Caco-2 (cell line): ENCODE measurements at regions of chr15 and their contacts with region 1.

Region 1: GRCh38 chr15:53384417-53384816 is 375.0 kb downstream of the WDR72 start:
- DNase-seq: peak; percentile 34 to 41
- H3K4me3 ChIP-seq: no peak overlapping the region
- H3K4me3 Mint-ChIP-seq: no peak overlapping the region
- H3K27ac Mint-ChIP-seq: no peak overlapping the region
- H3K4me1 ChIP-seq: no peaks in the 10 kb centered on the region
- H3K4me1 Mint-ChIP-seq: no peaks in the 10 kb centered on the region
- H3K27me3 ChIP-seq: no peaks in the 10 kb centered on the region
- H3K27me3 Mint-ChIP-seq: peaks cover 2% of the 10 kb centered on the region
- CTCF ChIP-seq: peak; percentile 43 to 61

Region 2: GRCh38 chr15:53367740-53368139 is 16.7 kb before region 1 on chr15:
- CTCF ChIA-PET with region 1: no interaction called
- POLR2A ChIA-PET with region 1: no interaction called
- intact Hi-C with region 1: no loop called
- DNase-seq: no peak
- H3K4me3 ChIP-seq: no peak overlapping the region
- H3K4me3 Mint-ChIP-seq: no peak overlapping the region
- H3K27ac Mint-ChIP-seq: no peak overlapping the region
- H3K4me1 ChIP-seq: no peaks in the 10 kb centered on the region
- H3K4me1 Mint-ChIP-seq: no peaks in the 10 kb centered on the region
- H3K27me3 ChIP-seq: no peaks in the 10 kb centered on the region
- H3K27me3 Mint-ChIP-seq: no peaks in the 10 kb centered on the region
- CTCF ChIP-seq: no peak

Region 3: GRCh38 chr15:53506370-53506769 is 122.0 kb after region 1 on chr15:
- CTCF ChIA-PET with region 1: no interaction called
- POLR2A ChIA-PET with region 1: no interaction called
- intact Hi-C with region 1: loop called (anchors 1 kb)
- DNase-seq: peak in 1 of 2 experiments; percentile 9
- H3K4me3 ChIP-seq: no peak overlapping the region
- H3K4me3 Mint-ChIP-seq: no peak overlapping the region
- H3K27ac Mint-ChIP-seq: no peak overlapping the region
- H3K4me1 ChIP-seq: no peaks in the 10 kb centered on the region
- H3K4me1 Mint-ChIP-seq: no peaks in the 10 kb centered on the region
- H3K27me3 ChIP-seq: no peaks in the 10 kb centered on the region
- H3K27me3 Mint-ChIP-seq: peaks cover 3% of the 10 kb centered on the region
- CTCF ChIP-seq: no peak

Region 4: GRCh38 chr15:53512030-53512429 is 127.6 kb after region 1 on chr15:
- CTCF ChIA-PET with region 1: interaction called, 12 read pairs
- POLR2A ChIA-PET with region 1: no interaction called
- intact Hi-C with region 1: loop called (anchors 1 kb)
- DNase-seq: no peak
- H3K4me3 ChIP-seq: no peak overlapping the region
- H3K4me3 Mint-ChIP-seq: no peak overlapping the region
- H3K27ac Mint-ChIP-seq: no peak overlapping the region
- H3K4me1 ChIP-seq: no peaks in the 10 kb centered on the region
- H3K4me1 Mint-ChIP-seq: no peaks in the 10 kb centered on the region
- H3K27me3 ChIP-seq: no peaks in the 10 kb centered on the region
- H3K27me3 Mint-ChIP-seq: no peaks in the 10 kb centered on the region
- CTCF ChIP-seq: peak; percentile 27 to 38

Region 5: GRCh38 chr15:53586799-53587198 is 202.4 kb after region 1 on chr15:
- CTCF ChIA-PET with region 1: no interaction called
- POLR2A ChIA-PET with region 1: no interaction called
- intact Hi-C with region 1: loop called (anchors 2 kb)
- DNase-seq: peak; percentile 64 to 74
- H3K4me3 ChIP-seq: no peak overlapping the region
- H3K4me3 Mint-ChIP-seq: no peak overlapping the region
- H3K27ac Mint-ChIP-seq: no peak overlapping the region
- H3K4me1 ChIP-seq: no peaks in the 10 kb centered on the region
- H3K4me1 Mint-ChIP-seq: no peaks in the 10 kb centered on the region
- H3K27me3 ChIP-seq: no peaks in the 10 kb centered on the region
- H3K27me3 Mint-ChIP-seq: no peaks in the 10 kb centered on the region
- CTCF ChIP-seq: peak; percentile 63 to 66

Region 6: DNA sequence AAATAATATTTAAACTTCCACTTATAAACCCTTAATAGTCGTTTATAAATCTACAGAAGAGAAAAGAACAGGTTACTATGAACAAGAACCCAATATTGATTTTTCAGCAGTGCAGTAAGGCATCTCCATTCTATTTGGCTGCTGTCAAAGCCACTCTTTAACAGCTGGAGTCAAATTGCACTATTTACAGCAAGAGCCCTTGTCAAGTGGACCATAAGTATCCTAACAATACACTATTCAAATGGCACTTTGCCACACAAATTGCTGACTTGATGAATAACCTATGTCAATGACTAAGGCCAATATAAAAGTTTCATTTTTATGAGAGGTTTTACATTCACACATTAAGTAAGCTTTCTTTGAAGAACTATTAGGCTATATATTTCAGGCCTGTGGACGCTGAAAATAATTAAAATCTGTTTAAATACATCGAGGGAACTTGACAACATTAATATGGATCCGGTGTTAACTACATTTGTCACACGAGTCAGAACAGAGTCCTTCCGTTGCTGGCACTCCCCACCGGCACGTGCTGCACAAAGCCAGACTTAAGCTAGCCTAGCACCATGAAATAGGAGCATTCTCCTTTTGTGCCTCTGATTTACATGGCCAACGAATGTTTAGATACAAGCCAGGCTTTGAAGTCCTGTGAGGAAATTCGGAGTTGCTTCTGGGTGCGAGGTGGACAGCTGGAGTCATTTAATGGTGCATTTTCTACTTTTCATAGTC is 274.6 kb after region 1 on chr15:
- CTCF ChIA-PET with region 1: no interaction called
- POLR2A ChIA-PET with region 1: no interaction called
- intact Hi-C with region 1: loop called (anchors 10 kb)
- DNase-seq: no peak
- H3K4me3 ChIP-seq: no peak overlapping the region
- H3K4me3 Mint-ChIP-seq: no peak overlapping the region
- H3K27ac Mint-ChIP-seq: no peak overlapping the region
- H3K4me1 ChIP-seq: no peaks in the 10 kb centered on the region
- H3K4me1 Mint-ChIP-seq: no peaks in the 10 kb centered on the region
- H3K27me3 ChIP-seq: no peaks in the 10 kb centered on the region
- H3K27me3 Mint-ChIP-seq: no peaks in the 10 kb centered on the region
- CTCF ChIP-seq: no peak

Region 7: DNA sequence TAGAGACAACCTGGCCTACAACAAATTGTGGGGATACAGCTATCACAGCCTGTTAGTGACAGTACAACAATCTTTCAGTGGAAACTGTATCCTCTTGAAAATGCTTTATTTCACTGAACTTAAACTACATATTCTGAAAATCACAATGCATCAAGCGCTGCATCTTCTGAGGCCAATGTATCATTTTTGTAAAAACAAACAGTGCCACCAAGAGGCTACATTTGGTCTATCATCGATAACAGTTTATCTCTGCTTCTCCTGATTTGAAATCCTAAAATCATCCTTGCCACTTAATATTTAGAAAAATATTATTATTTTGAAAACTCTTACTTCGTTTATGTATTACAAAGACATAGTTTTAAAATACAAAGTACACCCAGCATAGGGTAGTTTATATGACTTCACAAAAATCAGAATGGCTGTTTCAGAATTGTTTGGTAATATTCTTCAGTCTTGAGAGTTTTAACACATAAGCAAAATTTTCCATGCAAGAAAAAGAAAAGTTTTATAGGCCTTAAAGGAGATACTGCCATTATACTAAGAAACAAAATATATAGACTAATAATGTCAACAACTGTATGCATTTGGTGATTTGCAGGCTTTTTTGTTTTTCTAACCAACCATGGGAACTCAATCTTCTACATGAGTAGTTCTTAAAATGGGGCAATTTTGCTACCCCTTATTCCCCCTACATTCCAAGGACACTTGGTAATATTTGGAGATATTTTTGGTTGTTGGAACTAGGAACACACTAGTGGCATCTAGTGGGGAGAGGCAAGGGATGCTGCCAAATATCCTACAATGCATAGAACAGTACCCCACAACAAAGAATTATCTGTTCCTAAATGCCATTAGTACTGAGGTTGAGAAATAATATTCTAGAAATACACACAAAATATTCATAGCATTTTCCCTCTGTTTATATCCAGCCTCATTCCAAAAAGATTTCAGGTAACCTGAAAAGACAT is 332.8 kb after region 1 on chr15:
- CTCF ChIA-PET with region 1: no interaction called
- POLR2A ChIA-PET with region 1: no interaction called
- intact Hi-C with region 1: loop called (anchors 1 kb)
- DNase-seq: peak in 1 of 2 experiments; percentile 4
- H3K4me3 ChIP-seq: no peak overlapping the region
- H3K4me3 Mint-ChIP-seq: no peak overlapping the region
- H3K27ac Mint-ChIP-seq: no peak overlapping the region
- H3K4me1 ChIP-seq: no peaks in the 10 kb centered on the region
- H3K4me1 Mint-ChIP-seq: no peaks in the 10 kb centered on the region
- H3K27me3 ChIP-seq: no peaks in the 10 kb centered on the region; the same call in 1 of the 2 replicates
- H3K27me3 Mint-ChIP-seq: peaks cover 8% of the 10 kb centered on the region
- CTCF ChIP-seq: peak; percentile 30 to 42